PC-9 (cell line): ENCODE measurements at regions of chrX and their contacts with region 1.

Region 1: DNA sequence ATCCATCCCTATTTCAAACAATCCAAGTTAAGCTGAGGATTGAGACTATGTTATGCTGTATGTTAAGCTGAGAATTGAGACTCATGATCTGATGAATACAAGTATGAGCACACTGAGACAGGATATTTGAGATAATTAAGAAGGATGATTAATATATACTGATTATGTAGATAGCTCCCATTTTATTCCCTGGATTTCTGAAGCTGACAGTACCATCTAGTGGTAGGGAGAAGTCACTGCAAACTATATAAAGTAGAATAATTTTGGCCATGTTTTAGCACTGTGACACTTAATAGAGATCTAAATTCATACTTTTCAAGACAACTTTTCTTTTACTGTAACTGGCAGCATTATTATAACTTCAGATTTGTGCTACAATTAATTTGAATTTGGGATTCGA is 63.8 kb upstream of the HPRT1 start:
- DNase-seq: peak in 1 of 2 experiments; percentile 57
- H3K4me3 ChIP-seq: no peak overlapping the region
- H3K27ac ChIP-seq: no peak overlapping the region
- H3K4me1 ChIP-seq: no peaks in the 10 kb centered on the region
- H3K27me3 ChIP-seq: no peaks in the 10 kb centered on the region
- CTCF ChIP-seq: peak; percentile 93

Region 2: DNA sequence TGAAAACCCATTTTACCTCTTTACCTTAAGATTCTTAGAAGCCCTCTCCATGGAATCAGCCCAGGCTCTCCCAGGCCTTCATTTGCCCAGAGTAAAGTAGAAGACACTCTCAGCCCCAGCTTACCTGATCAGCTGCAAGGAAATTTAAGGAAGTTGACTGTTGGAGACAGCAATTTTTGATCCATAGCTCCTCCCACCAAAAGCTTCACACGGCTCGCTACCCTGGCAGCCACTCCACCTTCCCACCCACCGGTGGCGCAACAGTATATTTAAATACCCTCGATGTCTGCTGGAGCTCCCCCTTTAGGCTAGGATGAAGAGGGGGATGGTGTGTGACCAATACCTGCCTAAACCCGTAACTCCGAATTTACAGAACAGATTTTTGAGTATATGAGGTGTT is 1982.7 kb before region 1 on chrX:
- CTCF ChIA-PET with region 1: no interaction called
- POLR2A ChIA-PET with region 1: no interaction called
- intact Hi-C with region 1: no loop called
- DNase-seq: no peak
- H3K4me3 ChIP-seq: no peak overlapping the region
- H3K27ac ChIP-seq: no peak overlapping the region
- H3K4me1 ChIP-seq: no peaks in the 10 kb centered on the region
- H3K27me3 ChIP-seq: no peaks in the 10 kb centered on the region
- CTCF ChIP-seq: no peak

Region 3: GRCh38 chrX:133776072-133776471 is 620.1 kb before region 1 on chrX:
- CTCF ChIA-PET with region 1: no interaction called
- POLR2A ChIA-PET with region 1: no interaction called
- intact Hi-C with region 1: no loop called
- DNase-seq: peak in 1 of 2 experiments; percentile 10
- H3K4me3 ChIP-seq: no peak overlapping the region
- H3K27ac ChIP-seq: no peak overlapping the region
- H3K4me1 ChIP-seq: no peaks in the 10 kb centered on the region
- H3K27me3 ChIP-seq: no peaks in the 10 kb centered on the region
- CTCF ChIP-seq: peak; percentile 64

Region 4: DNA sequence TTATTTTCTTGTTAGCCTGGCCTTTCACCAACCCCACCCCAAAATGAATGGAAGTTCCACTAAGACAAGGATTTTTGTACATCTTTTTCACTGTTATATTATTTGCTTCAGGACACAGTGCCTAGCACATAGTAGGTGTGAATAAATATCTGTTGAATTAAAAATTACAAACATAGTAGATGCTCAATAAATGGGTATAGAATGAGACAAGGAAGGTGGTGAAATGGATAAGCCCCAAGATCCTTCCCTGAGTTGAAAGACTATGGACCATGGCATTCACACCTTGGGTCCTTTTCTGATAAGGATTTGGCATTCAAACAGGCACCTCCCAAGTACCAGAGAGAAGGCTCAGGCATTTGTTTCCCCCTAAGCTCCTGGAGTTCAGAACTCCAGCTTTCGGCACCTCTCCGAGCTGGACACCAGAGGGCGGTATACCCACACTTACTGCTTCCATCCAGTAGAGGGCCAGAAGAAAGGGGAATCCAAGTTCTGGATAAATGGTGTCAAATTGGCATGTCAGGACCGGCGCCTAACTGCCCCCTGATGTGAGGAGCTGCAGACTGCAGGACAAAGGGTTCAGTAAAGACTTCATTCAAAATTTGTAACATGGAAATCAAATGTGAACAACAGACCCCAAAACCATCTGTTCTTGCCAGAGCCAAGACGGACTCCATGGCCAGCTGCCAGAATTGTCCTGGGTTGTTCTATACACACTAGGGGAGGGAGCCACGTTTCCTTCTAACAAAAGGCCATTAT is 603.8 kb before region 1 on chrX:
- CTCF ChIA-PET with region 1: interaction called, 7 read pairs
- POLR2A ChIA-PET with region 1: no interaction called
- intact Hi-C with region 1: loop called (anchors 2 kb)
- DNase-seq: peak; percentile 60 to 61
- H3K4me3 ChIP-seq: no peak overlapping the region
- H3K27ac ChIP-seq: no peak overlapping the region
- H3K4me1 ChIP-seq: no peaks in the 10 kb centered on the region
- H3K27me3 ChIP-seq: no peaks in the 10 kb centered on the region
- CTCF ChIP-seq: peak; percentile 96

Region 5: DNA sequence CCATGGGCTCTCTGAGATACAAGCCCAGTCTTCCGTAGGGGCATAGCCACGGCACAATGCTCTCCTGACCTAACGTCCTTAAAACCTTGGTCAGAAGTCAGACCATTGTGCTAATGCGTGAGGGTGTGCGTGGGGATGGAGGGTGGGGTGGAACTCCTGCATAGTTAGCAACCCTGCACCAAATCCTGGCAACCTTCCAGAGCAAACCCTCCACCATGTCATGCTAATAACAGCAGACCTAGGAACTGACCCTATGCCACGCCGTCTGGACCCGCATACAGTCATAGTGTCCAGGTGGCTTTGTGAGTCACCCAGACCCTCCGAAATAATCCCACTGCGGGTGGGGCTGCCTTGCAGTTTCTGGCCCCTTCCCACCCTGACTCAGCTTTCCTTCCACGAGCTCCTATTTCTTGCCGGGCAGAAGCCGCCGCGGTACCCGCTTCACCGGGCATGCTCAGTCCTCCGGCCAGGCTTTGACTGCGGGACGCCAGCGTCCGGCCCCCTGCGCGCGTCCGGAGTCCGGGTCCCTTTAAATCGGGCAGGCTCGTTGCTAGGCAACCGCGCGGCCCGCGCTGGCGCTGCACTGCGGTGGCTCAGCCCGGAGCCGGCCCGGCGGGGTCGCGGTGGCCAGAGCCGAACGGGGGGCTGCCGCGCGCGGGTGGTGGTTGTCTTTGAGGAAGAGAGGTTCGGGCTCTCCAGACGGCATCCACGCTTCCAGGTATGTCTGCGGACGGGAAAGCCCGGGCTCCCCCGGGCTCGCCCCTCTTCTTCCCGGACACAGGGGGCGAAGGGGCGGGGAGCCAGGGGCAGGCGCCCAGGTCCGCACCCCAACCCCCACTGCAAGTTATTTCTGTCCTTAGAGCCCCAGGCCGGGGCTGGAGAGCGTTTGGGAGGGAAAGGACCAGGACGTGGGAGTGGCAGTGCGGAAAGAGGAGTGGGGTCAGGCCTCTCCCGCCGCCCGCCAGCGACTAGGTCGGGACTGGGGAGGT is 159.3 kb before region 1 on chrX and contains the start of gene CCDC160:
- CTCF ChIA-PET with region 1: no interaction called
- POLR2A ChIA-PET with region 1: no interaction called
- intact Hi-C with region 1: loop called (anchors 5 kb)
- DNase-seq: peak; percentile 52 to 63
- H3K4me3 ChIP-seq: peak within 1 kb of the TSS; percentile 71
- H3K27ac ChIP-seq: no peak within 1 kb of the TSS
- H3K4me1 ChIP-seq: peaks cover 45% of the 10 kb centered on the region
- H3K27me3 ChIP-seq: no peaks in the 10 kb centered on the region
- CTCF ChIP-seq: no peak
- total RNA-seq, gene CCDC160: 0.23 and 0.48 TPM in 2 replicates

Region 6: GRCh38 chrX:134377537-134377936 is 18.6 kb before region 1 on chrX:
- CTCF ChIA-PET with region 1: no interaction called
- POLR2A ChIA-PET with region 1: interaction called, 15 read pairs
- intact Hi-C with region 1: no loop called
- DNase-seq: no peak
- H3K4me3 ChIP-seq: no peak overlapping the region
- H3K27ac ChIP-seq: no peak overlapping the region
- H3K4me1 ChIP-seq: peaks cover 15% of the 10 kb centered on the region
- H3K27me3 ChIP-seq: no peaks in the 10 kb centered on the region
- CTCF ChIP-seq: peak; percentile 41

Region 7: DNA sequence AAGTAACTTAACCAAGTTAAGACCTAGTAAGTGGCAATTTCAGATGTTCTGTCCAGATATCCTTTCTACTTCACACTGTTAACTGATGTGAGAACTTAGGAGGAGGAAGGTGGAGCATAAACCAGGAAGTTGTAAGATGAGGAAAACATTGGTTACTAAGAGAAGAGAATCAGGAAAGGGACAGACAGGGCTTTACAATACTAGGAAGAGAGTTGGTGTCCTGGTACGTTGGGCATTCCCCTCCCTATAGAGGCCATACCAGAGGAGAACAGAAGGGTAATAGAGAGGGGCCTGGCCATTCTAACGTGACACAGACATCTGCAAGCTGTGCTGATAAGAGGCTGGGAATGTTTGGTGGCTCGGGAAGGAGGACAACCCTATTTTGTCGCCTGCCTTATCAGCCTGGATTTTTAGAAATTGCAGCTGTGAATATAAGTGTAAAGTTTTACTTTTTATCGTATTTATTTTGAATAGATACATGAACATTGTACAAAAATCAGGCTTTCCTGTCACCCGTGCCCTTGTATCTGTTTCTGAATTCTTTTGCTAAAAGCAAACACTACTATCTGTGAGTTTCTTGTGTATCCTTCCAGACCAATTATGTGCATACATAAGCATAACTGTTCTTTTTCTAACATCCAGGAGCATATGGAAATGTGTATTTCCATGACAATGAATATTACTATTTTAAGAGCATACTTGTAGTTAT is 10.3 kb after region 1 on chrX:
- CTCF ChIA-PET with region 1: interaction called, 10 read pairs
- POLR2A ChIA-PET with region 1: no interaction called
- intact Hi-C with region 1: no loop called
- DNase-seq: no peak
- H3K4me3 ChIP-seq: no peak overlapping the region
- H3K27ac ChIP-seq: no peak overlapping the region
- H3K4me1 ChIP-seq: no peaks in the 10 kb centered on the region
- H3K27me3 ChIP-seq: no peaks in the 10 kb centered on the region
- CTCF ChIP-seq: no peak

Region 8: DNA sequence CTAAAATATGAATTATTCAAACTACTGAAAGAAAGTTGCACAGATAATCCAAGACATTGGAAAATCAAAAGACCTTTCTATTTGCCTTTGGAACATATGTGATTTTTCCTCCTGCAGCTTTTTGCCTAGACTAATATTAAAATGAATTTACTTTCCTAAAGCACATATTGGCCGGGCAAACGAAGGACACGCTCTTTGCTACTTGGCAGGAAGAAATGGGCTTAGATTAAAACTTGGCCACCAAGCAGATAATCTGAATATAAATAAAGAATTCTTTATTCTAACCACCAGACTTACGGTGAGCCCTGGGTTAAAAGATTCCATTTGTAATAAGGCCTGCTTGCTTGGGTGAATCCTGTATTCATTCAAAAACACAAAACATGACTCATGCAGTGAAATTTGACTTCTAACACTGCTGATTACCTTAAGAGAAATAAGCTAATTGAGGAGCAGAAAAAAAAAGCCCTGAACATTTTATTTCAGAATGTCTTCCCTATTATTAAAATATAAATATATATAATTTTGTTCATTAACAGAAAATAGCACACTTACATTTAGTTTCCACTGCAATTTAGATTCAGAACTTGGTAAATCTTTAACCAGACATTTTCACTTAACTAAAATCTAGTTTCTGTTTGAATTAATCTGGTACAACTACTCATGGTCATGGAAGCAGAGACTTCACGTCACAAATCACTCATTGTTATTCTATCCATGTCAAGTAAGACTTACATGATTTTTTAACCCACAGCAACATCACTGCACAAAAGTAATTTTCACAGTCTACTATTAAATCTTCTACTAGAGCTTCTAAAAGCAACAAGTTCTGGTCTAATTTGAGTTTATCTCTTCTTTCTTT is 378.2 kb after region 1 on chrX:
- CTCF ChIA-PET with region 1: no interaction called
- POLR2A ChIA-PET with region 1: no interaction called
- intact Hi-C with region 1: no loop called
- DNase-seq: no peak
- H3K4me3 ChIP-seq: no peak overlapping the region
- H3K27ac ChIP-seq: no peak overlapping the region
- H3K4me1 ChIP-seq: no peaks in the 10 kb centered on the region
- H3K27me3 ChIP-seq: no peaks in the 10 kb centered on the region
- CTCF ChIP-seq: no peak